Naive thymus-derived CD8-positive, alpha-beta T cell (primary cell): ENCODE measurements at regions of chr2 and their contacts with region 1.

Region 1: DNA sequence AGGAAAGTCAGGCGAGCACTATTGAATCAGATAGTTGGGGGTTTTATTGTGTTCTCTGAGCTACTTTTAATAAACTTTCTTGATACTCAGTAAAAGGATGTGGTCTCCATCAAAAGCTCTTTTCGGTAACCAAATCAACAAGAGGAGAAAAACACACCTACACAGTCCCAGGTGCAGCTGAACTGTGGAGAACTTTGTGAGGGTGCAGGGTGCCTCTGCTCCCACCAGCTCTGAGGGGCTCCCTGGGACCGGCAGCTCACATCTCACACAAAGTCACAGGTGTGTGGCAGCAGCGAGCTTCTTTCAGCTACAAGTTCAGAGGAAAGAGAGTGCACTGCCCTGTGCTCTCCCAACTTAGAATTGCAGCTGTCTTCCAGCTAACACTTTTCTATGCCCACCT is 650.4 kb downstream of the RNF144A start:
- DNase-seq: peak; percentile 36 to 93 (median 75)
- ATAC-seq: peak; percentile 93 to 94
- H3K4me3 Mint-ChIP-seq: peak overlapping the region; percentile 34 to 75 (median 66)
- H3K27ac Mint-ChIP-seq: peak overlapping the region; percentile 90 to 99 (median 94)
- H3K4me1 Mint-ChIP-seq: peaks cover 34 to 74% (median 64%) of the 10 kb centered on the region in 4 donors
- H3K27me3 Mint-ChIP-seq: no peaks in the 10 kb centered on the region

Region 2: GRCh38 chr2:6741239-6741638 is 826.4 kb before region 1 on chr2:
- POLR2A ChIA-PET with region 1: no interaction called
- DNase-seq: no peak
- ATAC-seq: no peak
- H3K4me3 Mint-ChIP-seq: no peak overlapping the region
- H3K27ac Mint-ChIP-seq: no peak overlapping the region
- H3K4me1 Mint-ChIP-seq: no peaks in the 10 kb centered on the region
- H3K27me3 Mint-ChIP-seq: peaks cover 9 to 50% (median 18%) of the 10 kb centered on the region in 5 donors

Region 3: DNA sequence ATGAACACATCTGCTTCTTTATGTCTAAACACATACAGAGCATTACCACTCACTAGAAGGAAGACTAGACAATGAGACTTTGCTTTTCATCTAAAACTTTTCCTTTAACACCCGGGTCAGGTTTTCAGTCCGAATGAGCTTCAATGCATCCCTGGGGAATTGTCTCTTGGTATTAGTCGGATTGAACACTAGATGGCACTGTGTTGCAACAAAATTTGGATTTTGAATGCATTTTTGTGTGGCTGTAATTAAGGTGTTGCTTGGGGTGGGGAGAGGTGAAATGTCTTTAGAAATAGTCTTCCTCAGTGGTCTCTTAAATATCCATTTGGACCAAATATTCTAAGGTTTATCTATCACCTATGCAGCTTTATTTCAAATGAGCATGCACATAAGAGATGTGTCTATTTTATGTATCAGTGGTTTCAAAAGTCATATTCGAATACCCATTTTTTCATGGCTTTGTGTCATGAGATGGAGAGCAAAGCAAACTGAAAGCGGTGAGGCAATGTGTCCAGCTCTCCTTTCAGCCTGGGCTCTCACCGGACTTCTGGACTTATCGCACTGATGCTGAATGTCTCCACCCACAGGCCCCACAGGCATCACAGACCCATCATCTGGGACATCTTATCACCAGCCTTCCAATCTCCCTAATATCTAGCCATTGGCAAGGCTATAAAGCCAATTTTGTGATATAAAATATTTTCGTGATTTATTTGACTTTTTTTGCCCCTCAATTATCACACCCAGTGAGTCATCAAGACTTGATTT is 140.2 kb before region 1 on chr2:
- POLR2A ChIA-PET with region 1: interaction called, 37 read pairs
- DNase-seq: peak in 6 of 10 donors; percentile 19 to 77 (median 62)
- ATAC-seq: peak; percentile 10 to 35
- H3K4me3 Mint-ChIP-seq: peak overlapping the region in 7 of 10 donors; percentile 2 to 48 (median 26)
- H3K27ac Mint-ChIP-seq: peak overlapping the region; percentile 47 to 99 (median 80)
- H3K4me1 Mint-ChIP-seq: peaks cover 34 to 46% (median 46%) of the 10 kb centered on the region in 4 donors
- H3K27me3 Mint-ChIP-seq: peaks cover 0 to 3% (median 0%) of the 10 kb centered on the region in 5 donors

Region 4: GRCh38 chr2:7444626-7445025 is 123.0 kb before region 1 on chr2:
- POLR2A ChIA-PET with region 1: interaction called, 42 read pairs
- DNase-seq: no peak
- ATAC-seq: peak; percentile 36 to 45
- H3K4me3 Mint-ChIP-seq: peak overlapping the region in 6 of 10 donors; percentile 11 to 66 (median 28)
- H3K27ac Mint-ChIP-seq: peak overlapping the region in 8 of 10 donors; percentile 7 to 92 (median 61)
- H3K4me1 Mint-ChIP-seq: peaks cover 30 to 75% (median 67%) of the 10 kb centered on the region in 4 donors
- H3K27me3 Mint-ChIP-seq: no peaks in the 10 kb centered on the region

Region 5: GRCh38 chr2:7450188-7450832 is 117.3 kb before region 1 on chr2:
- POLR2A ChIA-PET with region 1: interaction called, 42 read pairs
- DNase-seq: peak in 8 of 10 donors; percentile 46 to 90 (median 76)
- ATAC-seq: peak; percentile 81 to 91
- H3K4me3 Mint-ChIP-seq: peak overlapping the region; percentile 46 to 84 (median 78)
- H3K27ac Mint-ChIP-seq: peak overlapping the region; percentile 96 to 99 (median 98)
- H3K4me1 Mint-ChIP-seq: peaks cover 51 to 86% (median 78%) of the 10 kb centered on the region in 4 donors
- H3K27me3 Mint-ChIP-seq: no peaks in the 10 kb centered on the region

Region 6: DNA sequence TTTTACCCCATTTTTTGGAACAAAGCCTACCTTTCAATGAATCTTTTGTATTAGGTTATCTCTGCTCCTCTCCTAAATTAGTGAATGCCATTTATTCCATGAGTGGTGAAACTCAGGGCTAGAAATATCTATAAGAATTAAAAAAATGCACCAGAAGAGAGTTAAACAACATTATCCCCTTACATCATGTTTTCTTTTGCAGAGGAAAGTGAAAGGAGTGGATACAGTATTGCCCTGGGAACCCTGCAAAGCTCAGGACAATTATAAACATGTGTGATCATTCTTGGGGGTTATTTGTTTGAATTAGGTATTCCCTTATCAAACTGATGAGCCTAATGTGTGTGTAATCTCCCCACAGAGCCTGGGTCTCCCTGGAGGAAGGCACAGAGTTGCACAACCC is 91.3 kb before region 1 on chr2:
- POLR2A ChIA-PET with region 1: no interaction called
- DNase-seq: no peak
- ATAC-seq: no peak
- H3K4me3 Mint-ChIP-seq: no peak overlapping the region
- H3K27ac Mint-ChIP-seq: no peak overlapping the region
- H3K4me1 Mint-ChIP-seq: peaks cover 15 to 44% (median 28%) of the 10 kb centered on the region in 4 donors
- H3K27me3 Mint-ChIP-seq: no peaks in the 10 kb centered on the region

Region 7: GRCh38 chr2:7510350-7510749 is 57.3 kb before region 1 on chr2:
- POLR2A ChIA-PET with region 1: interaction called, 11 read pairs
- DNase-seq: no peak
- ATAC-seq: no peak
- H3K4me3 Mint-ChIP-seq: no peak overlapping the region
- H3K27ac Mint-ChIP-seq: peak overlapping the region in 2 of 10 donors; percentile 25 to 27
- H3K4me1 Mint-ChIP-seq: peaks cover 18 to 70% (median 50%) of the 10 kb centered on the region in 4 donors
- H3K27me3 Mint-ChIP-seq: peaks cover 0 to under 1% (median 0%) of the 10 kb centered on the region in 5 donors

Region 8: DNA sequence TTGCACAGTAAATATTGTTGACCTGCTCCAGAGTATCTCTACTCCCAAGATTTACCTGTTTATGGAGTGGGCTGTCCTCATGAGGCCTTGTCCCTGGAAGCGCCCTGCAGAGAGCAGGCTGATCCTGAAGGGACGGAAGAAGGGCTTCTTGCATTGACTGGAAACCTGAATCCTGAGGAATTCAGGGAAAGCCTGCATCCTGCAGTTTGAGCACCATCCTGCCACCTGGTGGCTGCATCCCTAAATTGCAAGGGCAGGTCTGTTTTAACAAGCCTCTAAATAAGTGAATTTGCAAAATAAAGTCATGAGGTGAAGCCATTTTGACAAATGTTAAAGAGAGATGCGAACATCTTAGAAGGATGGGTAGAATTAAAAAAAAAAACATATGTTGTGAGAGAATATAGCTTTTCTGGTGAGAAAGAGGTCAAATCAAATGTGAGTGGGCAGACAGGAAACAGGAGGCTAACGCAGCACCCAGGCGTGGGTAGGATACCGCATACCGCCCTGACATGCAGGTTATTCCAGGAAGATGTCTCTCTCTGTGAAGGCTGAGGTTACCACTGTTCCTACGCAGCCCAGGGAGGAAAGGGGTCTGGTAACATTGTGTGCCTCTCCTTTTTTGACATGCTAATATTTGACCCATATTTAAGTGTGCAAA is 104.5 kb after region 1 on chr2:
- POLR2A ChIA-PET with region 1: interaction called, 13 read pairs
- DNase-seq: peak in 9 of 10 donors; percentile 16 to 66 (median 48)
- ATAC-seq: peak; percentile 78 to 90
- H3K4me3 Mint-ChIP-seq: peak overlapping the region; percentile 27 to 80 (median 76)
- H3K27ac Mint-ChIP-seq: peak overlapping the region; percentile 82 to 99 (median 90)
- H3K4me1 Mint-ChIP-seq: peaks cover 35 to 46% (median 36%) of the 10 kb centered on the region in 4 donors
- H3K27me3 Mint-ChIP-seq: no peaks in the 10 kb centered on the region

Region 9: GRCh38 chr2:7725171-7725849 is 157.7 kb after region 1 on chr2:
- POLR2A ChIA-PET with region 1: interaction called, 25 read pairs
- DNase-seq: peak in 6 of 10 donors; percentile 12 to 74 (median 66)
- ATAC-seq: peak; percentile 79 to 86
- H3K4me3 Mint-ChIP-seq: peak overlapping the region; percentile 55 to 92 (median 82)
- H3K27ac Mint-ChIP-seq: peak overlapping the region; percentile 52 to 99 (median 88)
- H3K4me1 Mint-ChIP-seq: peaks cover 19 to 53% (median 46%) of the 10 kb centered on the region in 4 donors
- H3K27me3 Mint-ChIP-seq: no peaks in the 10 kb centered on the region

Region 10: GRCh38 chr2:7773362-7774360 is 206.0 kb after region 1 on chr2:
- POLR2A ChIA-PET with region 1: no interaction called
- DNase-seq: no peak
- ATAC-seq: no peak
- H3K4me3 Mint-ChIP-seq: peak overlapping the region in 1 of 10 donors; percentile 66
- H3K27ac Mint-ChIP-seq: peak overlapping the region in 2 of 10 donors; percentile 4
- H3K4me1 Mint-ChIP-seq: peaks cover 3 to 12% (median 9%) of the 10 kb centered on the region in 4 donors
- H3K27me3 Mint-ChIP-seq: no peaks in the 10 kb centered on the region